ENCODE measurements at regions of chr19 and their contacts with region 1.

Region 1: GRCh38 chr19:44890366-44891015 is 563 bp upstream of the TOMM40 start:
- DNase-seq: peak; percentile 100
- H3K4me3 Mint-ChIP-seq: peak overlapping the region; percentile 85
- H3K27ac Mint-ChIP-seq: peak overlapping the region; percentile 97
- H3K4me1 Mint-ChIP-seq: peaks cover 27% of the 10 kb centered on the region
- H3K27me3 Mint-ChIP-seq: no peaks in the 10 kb centered on the region

Region 2: DNA sequence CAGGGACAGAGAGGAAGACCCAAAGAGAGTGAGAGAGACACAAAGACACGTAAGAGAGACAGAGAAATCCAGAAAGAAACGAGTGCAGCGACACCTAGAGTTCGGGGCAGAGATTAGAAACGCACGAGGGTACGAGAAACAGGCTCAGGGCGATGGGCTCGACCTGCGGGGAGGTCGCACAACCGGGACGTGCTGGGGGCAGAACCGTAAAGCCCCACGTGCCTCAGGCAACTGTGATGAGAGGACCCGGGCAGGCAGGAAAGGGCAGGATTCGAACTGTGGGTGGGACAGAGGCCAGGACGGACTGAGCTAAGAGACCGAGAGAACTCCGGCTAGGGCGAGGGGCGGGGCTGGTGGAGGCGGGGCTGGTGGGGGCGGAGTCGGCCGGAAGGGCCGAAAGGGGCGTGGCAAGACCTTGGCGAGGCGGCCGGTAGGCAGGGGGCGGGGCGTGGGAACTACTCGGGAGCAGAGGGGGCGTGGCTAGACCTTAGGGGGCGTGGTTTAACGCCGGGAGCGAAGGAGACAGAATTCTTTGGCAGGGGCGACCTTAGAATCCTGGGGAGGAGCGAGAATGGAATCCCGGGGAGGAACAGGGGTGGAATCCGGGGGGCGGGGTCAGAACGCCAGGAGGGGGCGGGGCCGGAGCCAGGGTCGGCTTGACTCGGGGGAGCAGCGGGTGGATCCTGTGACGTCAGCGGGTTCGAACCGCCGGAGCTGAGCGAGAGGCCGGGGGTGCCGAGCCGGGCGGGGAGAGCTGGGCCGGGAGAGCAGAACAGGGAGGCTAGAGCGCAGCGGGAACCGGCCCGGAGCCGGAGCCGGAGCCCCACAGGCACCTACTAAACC is 44.7 kb before region 1 on chr19 and contains the start of gene NECTIN2:
- CTCF ChIA-PET with region 1: interaction called, 3 read pairs
- POLR2A ChIA-PET with region 1: no interaction called
- intact Hi-C with region 1: loop called (anchors 1 kb)
- DNase-seq: peak; percentile 96
- H3K4me3 Mint-ChIP-seq: peak within 1 kb of the TSS; percentile 81
- H3K27ac Mint-ChIP-seq: peak within 1 kb of the TSS; percentile 24
- H3K4me1 Mint-ChIP-seq: peaks cover 26% of the 10 kb centered on the region
- H3K27me3 Mint-ChIP-seq: peaks cover 11% of the 10 kb centered on the region
- total RNA-seq, gene NECTIN2: 0.71 to 1.9 TPM

Region 3: DNA sequence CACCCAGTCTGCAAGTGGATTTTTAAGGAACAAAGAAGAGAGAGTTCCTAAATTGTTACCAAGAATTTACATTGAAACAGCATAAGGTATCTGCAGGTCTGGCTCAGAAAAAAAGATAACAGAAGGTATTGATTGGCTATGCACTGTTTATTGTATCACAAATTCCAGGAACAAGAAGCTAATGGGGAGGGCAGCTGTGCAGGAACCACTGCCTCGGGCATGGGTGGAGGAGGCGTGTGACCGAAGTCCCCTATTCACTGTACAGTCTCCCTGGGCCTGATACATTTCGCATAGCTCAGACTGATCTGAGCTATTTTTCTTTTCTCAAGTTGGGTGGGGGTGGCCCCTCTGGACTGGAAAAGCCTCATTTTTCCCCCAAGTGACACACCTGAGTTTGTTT is 32.7 kb before region 1 on chr19:
- CTCF ChIA-PET with region 1: no interaction called
- POLR2A ChIA-PET with region 1: no interaction called
- intact Hi-C with region 1: no loop called
- DNase-seq: no peak
- H3K4me3 Mint-ChIP-seq: no peak overlapping the region
- H3K27ac Mint-ChIP-seq: no peak overlapping the region
- H3K4me1 Mint-ChIP-seq: no peaks in the 10 kb centered on the region
- H3K27me3 Mint-ChIP-seq: peaks cover 2% of the 10 kb centered on the region

Region 4: GRCh38 chr19:44869733-44870470 is 20.6 kb before region 1 on chr19:
- CTCF ChIA-PET with region 1: no interaction called
- POLR2A ChIA-PET with region 1: no interaction called
- intact Hi-C with region 1: no loop called
- DNase-seq: no peak
- H3K4me3 Mint-ChIP-seq: no peak overlapping the region
- H3K27ac Mint-ChIP-seq: no peak overlapping the region
- H3K4me1 Mint-ChIP-seq: no peaks in the 10 kb centered on the region
- H3K27me3 Mint-ChIP-seq: no peaks in the 10 kb centered on the region

Region 5: GRCh38 chr19:44954824-44955586 is 64.5 kb after region 1 on chr19 and contains the start of gene CLPTM1:
- CTCF ChIA-PET with region 1: interaction called, 4 read pairs
- POLR2A ChIA-PET with region 1: no interaction called
- intact Hi-C with region 1: loop called (anchors 1 kb)
- DNase-seq: peak; percentile 98
- H3K4me3 Mint-ChIP-seq: peak within 1 kb of the TSS; percentile 97
- H3K27ac Mint-ChIP-seq: peak within 1 kb of the TSS; percentile 95
- H3K4me1 Mint-ChIP-seq: peaks cover 46% of the 10 kb centered on the region
- H3K27me3 Mint-ChIP-seq: no peaks in the 10 kb centered on the region
- total RNA-seq, gene CLPTM1: 43.9 to 45.0 TPM

Region 6: DNA sequence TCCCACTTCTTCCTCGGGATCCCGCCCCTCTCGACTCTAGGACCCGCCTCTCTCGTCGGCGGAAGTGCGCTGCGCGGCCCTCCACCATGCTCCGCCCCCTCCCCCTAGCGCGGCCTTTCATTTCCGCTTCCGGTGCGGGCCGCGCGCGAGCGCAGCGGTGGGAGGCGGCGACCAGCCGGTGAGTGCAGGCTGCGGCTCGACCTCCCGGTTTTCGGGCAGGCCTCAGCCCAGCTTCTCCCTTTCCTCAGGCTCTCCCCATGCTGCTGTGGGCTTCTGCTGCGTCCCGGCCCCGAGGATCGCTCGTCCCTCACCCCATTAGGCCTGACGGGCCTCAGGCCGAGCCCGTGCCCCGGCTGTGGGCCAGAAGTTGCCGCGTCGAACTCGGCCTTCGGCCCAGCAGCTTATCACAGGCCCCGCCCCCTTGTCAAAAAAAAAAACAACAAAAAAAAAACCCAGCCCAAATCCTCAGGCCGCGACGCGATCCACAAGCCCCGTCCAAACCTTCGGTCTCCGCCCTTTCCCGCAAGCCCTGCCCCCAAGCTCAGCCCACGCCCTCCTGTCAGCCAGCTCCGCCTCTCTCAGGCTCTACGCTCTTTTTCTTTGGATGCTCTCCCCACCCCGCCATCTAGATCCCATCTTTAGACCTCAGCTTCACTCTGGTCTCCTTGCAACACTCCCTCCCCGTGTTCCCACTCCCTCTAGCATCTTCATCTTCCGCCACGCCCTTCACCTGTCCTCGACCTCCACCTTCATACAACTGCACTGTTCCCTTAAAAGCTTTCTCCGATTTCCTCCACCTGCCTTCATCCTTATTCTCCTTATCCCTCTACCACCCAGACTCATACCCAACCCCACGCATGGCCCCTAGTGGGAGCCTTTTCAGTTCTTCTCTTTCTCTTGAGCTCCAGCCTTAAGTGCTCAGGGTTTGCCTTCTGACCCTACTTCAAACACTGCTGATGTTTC is 148.7 kb after region 1 on chr19 and contains the start of gene CLASRP:
- CTCF ChIA-PET with region 1: no interaction called
- POLR2A ChIA-PET with region 1: no interaction called
- intact Hi-C with region 1: loop called (anchors 2 kb)
- DNase-seq: peak; percentile 92
- H3K4me3 Mint-ChIP-seq: peak within 1 kb of the TSS; percentile 98
- H3K27ac Mint-ChIP-seq: peak within 1 kb of the TSS; percentile 95
- H3K4me1 Mint-ChIP-seq: peaks cover 29% of the 10 kb centered on the region
- H3K27me3 Mint-ChIP-seq: no peaks in the 10 kb centered on the region
- total RNA-seq, gene CLASRP: 89.6 to 98.4 TPM